PC-9 (cell line): ENCODE measurements at regions of chr6 and their contacts with region 1.

Region 1: DNA sequence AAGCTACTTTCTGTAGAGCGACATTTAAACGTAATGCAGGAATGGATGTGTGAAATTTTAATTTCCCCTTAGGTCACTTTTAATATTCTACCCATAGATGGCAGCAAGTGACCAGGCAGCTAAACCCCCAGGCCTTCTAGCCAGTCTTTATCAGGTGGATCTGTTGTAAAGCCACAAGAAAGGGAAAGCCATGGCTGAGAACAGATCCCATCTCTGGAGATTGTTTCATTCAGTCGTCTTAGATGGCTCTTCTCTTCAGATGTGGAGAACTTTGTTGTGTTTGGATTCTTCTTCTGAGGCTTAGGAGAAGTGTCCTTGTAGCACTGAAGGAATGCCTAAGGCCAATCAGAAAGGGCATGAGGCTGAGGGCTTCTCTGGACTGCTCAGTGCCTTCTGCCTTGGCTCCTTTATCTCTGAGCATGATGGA is 15.8 kb upstream of the RNF182 start:
- DNase-seq: peak; percentile 54 to 67
- H3K4me3 ChIP-seq: no peak overlapping the region
- H3K27ac ChIP-seq: no peak overlapping the region
- H3K4me1 ChIP-seq: peaks cover 18% of the 10 kb centered on the region
- H3K27me3 ChIP-seq: no peaks in the 10 kb centered on the region
- CTCF ChIP-seq: peak; percentile 92

Region 2: GRCh38 chr6:13795041-13795750 is 113.8 kb before region 1 on chr6:
- CTCF ChIA-PET with region 1: no interaction called
- POLR2A ChIA-PET with region 1: no interaction called
- intact Hi-C with region 1: loop called (anchors 10 kb)
- DNase-seq: peak; percentile 71 to 77
- H3K4me3 ChIP-seq: no peak overlapping the region
- H3K27ac ChIP-seq: peak overlapping the region; percentile 49
- H3K4me1 ChIP-seq: peaks cover 41% of the 10 kb centered on the region
- H3K27me3 ChIP-seq: no peaks in the 10 kb centered on the region
- CTCF ChIP-seq: peak; percentile 94

Region 3: GRCh38 chr6:13924146-13924948 is 15.4 kb after region 1 on chr6:
- CTCF ChIA-PET with region 1: interaction called, 10 read pairs
- POLR2A ChIA-PET with region 1: no interaction called
- intact Hi-C with region 1: no loop called
- DNase-seq: no peak
- H3K4me3 ChIP-seq: peak overlapping the region; percentile 33; the same call in 1 of the 2 replicates
- H3K27ac ChIP-seq: no peak overlapping the region
- H3K4me1 ChIP-seq: no peaks in the 10 kb centered on the region
- H3K27me3 ChIP-seq: no peaks in the 10 kb centered on the region
- CTCF ChIP-seq: no peak

Region 4: GRCh38 chr6:14066782-14067406 is 157.9 kb after region 1 on chr6:
- CTCF ChIA-PET with region 1: interaction called, 10 read pairs
- POLR2A ChIA-PET with region 1: no interaction called
- intact Hi-C with region 1: loop called (anchors 1 kb)
- DNase-seq: peak in 1 of 2 experiments; percentile 57
- H3K4me3 ChIP-seq: no peak overlapping the region
- H3K27ac ChIP-seq: no peak overlapping the region
- H3K4me1 ChIP-seq: peaks cover 26% of the 10 kb centered on the region
- H3K27me3 ChIP-seq: no peaks in the 10 kb centered on the region
- CTCF ChIP-seq: peak; percentile 86

Region 5: DNA sequence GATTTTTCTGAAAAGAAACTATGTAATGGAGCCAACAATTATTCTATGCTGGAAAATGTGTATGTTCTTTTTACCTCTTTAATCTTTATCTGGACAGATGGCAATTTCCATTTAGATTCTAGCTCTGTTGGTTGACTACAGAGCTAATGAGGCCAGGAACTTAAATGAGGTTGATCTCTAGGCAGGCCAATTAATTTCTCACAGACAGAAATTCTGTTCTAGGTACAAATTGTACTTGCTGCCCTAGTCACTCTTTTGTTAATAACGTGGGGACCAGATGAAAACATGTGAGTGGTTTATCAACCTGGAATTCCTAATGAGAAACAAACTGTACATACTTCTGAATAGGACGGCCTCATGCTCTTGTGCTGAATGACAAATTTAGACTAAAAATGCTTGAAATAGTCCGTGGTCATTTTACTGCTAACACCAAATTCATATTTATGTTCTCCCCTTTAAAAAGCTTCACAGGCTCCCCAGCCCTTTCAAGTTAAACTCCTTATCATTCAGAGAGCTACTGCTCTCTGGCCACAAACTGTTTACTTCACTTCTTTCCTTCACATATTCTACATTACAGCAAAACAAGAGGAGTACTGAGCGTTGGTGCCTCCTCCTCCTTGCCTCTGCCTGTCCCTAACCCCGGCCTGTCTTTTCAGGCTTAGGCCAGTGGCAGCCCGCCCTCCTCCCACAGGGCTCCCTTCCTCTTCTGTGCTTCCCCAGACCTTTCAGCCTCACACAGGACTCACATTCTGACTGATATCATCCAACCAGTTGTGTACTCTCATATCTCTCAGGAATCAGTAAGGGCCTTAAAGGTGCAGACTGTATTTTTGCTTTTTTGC is 1712.5 kb after region 1 on chr6:
- CTCF ChIA-PET with region 1: no interaction called
- POLR2A ChIA-PET with region 1: no interaction called
- intact Hi-C with region 1: loop called (anchors 2 kb)
- DNase-seq: no peak
- H3K4me3 ChIP-seq: no peak overlapping the region
- H3K27ac ChIP-seq: no peak overlapping the region
- H3K4me1 ChIP-seq: no peaks in the 10 kb centered on the region
- H3K27me3 ChIP-seq: no peaks in the 10 kb centered on the region
- CTCF ChIP-seq: no peak